HEK293 (cell line): ENCODE measurements at regions of chr5 and their contacts with region 1.

Region 1: DNA sequence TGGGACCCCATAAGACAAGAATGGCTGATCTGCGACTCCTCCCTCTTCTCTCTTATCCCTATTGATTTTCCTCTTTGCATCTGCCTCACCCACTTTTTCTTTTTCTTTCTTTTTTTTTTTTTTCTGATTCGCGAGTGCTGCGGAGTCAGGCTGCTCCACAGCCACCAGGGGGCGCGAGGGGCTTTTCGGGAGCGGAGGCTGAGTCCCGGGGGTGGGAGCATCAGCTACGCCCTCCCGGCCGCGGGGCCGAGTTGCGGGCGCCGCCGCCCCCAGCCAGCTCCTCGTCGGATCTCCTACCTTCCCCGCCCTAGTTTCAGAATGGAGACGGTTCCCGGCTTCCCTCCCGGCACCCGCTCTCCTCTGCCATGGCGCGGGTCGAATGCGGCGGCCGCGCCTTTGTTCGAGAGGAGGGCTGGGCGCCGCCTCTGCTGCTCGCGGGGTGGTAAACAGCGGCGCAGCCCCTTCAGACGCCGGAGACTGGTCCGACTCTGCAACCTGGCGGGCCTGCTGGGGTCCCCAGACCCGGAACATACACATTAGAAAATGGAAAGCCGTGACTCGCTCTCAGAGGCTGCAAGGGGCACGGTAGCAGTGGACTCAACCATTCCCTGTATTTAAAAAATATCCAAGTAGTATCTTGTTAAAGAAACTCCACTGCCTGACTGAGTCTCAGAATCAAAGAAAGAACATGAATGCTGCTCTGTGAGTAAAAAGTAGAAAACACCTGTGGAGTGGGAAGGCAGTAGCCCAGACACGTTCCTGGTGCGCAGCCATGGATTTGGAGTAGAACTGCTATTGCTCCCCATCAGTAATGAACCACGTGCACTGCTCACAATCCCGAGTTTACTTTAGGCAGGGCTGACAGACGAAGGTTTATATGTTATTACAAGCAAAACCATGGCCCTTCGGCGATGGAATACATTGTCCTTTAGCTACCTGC is 55.7 kb downstream of the DPYSL3 start:
- H3K4me3 ChIP-seq: peak overlapping the region; percentile 92
- H3K27ac ChIP-seq: peak overlapping the region; percentile 73
- H3K4me1 ChIP-seq: peaks cover 14% of the 10 kb centered on the region; the same call in 1 of the 2 replicates
- CTCF ChIP-seq: peak; percentile 98

Region 2: DNA sequence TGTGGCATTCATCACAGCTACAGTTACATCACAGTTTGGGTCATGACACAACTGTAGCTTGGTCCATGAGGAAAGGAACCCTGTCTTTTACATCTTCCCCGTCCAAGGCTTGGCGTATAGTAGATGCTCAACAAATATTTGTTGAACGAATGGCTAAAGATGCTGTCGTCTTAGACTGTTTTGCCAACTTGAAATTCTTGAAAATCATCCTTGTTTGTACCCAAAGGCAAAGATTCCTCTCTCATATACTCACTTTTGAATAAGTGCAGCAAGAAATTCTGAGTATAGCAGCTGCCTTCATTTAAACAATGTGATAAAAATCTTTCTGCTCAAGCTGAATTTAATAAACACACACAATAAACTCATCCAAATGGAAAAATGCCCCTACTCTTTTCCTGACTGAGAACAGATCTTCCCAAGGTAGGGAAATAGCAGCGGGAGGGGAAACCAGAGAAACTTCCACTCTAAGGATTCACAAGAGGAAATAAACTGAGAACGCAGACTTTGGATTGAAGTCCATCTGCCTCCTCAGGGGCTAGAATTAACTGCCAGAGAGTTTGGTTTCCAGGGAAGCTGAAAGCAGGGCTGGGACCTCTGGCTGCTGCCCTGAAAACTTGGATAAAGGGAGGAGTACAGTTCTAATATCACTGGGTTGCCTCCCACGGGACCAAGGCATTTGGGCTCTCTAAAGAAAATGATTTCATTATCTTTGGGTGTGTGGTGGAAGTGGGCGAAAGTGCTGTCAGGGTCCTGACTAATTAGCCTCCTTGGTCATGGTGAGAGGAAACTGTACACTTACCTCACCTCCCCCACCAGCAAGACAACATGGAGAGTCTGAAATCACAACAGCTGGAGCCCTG is 43.4 kb before region 1 on chr5:
- CTCF ChIA-PET with region 1: no interaction called
- POLR2A ChIA-PET with region 1: no interaction called
- H3K4me3 ChIP-seq: no peak overlapping the region
- H3K27ac ChIP-seq: no peak overlapping the region
- H3K4me1 ChIP-seq: no peaks in the 10 kb centered on the region
- CTCF ChIP-seq: no peak

Region 3: DNA sequence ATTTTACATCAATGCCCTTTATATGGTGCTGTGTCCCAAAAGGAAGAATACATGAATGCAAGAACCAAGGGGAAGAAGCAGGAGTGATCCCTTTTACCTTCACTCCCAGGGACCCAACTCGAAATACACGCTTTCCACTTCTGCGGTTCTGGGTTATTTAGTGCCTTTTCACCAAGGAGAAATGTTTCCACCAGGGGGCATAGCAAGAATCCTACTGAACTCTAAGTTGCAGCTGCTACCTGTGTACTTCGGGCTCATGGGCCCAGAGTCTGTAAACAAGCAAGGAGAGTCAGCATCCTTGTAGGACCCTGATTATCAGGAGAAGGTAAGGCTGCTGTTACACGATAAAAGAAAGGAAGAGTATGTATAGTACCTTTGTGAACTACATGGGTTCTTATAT is 10.1 kb after region 1 on chr5:
- CTCF ChIA-PET with region 1: interaction called, 10 read pairs
- POLR2A ChIA-PET with region 1: interaction called, 5 read pairs
- H3K4me3 ChIP-seq: no peak overlapping the region
- H3K27ac ChIP-seq: no peak overlapping the region
- H3K4me1 ChIP-seq: 0 out of 2 replicates have a peak, but pooled peaks cover 3% of the 10 kb centered on the region
- CTCF ChIP-seq: no peak

Region 4: DNA sequence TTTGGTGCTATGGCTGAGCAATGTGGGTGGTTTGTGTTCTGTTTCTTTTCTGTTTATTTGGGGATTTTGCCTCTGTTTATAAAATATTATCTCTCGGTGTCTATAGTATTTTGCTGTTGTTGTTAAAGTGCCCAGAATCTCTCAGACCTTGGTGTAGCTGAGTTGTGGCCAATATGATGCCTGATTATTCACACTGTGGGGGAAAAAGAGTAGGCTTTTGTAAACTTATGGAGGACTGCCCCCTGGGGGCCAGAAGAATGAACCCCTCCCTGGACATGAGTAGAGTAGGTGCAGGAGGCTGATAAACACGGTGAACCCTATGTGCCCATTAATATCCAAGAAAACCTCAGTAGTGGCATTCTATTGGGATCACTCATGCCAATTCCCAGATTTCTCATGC is 104.7 kb after region 1 on chr5:
- CTCF ChIA-PET with region 1: interaction called, 51 read pairs
- POLR2A ChIA-PET with region 1: interaction called, 4 read pairs
- H3K4me3 ChIP-seq: no peak overlapping the region
- H3K27ac ChIP-seq: no peak overlapping the region
- H3K4me1 ChIP-seq: no peaks in the 10 kb centered on the region
- CTCF ChIP-seq: peak; percentile 46; the same call in 1 of the 2 replicates

Region 5: DNA sequence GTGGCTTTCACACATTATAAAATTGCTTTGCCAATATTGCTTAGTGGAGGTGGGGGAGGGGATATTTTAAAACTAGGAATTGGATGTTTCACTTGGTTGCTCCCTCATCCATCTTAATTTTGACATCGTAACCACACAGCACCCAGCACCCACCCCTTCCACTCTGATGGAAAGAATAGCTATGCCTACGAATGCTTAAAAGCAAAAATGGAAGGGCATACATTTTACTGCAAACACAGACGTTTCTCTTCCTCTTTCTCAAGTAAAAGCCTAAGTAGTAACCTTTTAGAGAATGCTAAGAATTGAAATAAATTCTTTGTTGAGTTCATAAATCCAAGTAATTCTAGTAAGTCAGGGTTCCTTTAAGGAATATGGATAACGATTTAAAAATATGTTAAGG is 258.5 kb after region 1 on chr5:
- CTCF ChIA-PET with region 1: no interaction called
- POLR2A ChIA-PET with region 1: no interaction called
- H3K4me3 ChIP-seq: no peak overlapping the region
- H3K27ac ChIP-seq: no peak overlapping the region
- H3K4me1 ChIP-seq: peaks cover 4% of the 10 kb centered on the region; the same call in 1 of the 2 replicates
- CTCF ChIP-seq: no peak